Panc1 (cell line): ENCODE measurements at regions of chr17 and their contacts with region 1.

Region 1: GRCh38 chr17:77609553-77610517 is 348.7 kb upstream of the TNRC6C start:
- DNase-seq: no peak
- ATAC-seq: no peak
- H3K4me3 ChIP-seq: peak overlapping the region; percentile 4 to 37; a peak in 3 of 4 replicates
- H3K27ac ChIP-seq: no peak overlapping the region
- H3K4me1 ChIP-seq: no peaks in the 10 kb centered on the region
- H3K27me3 ChIP-seq: peaks cover 9% of the 10 kb centered on the region
- CTCF ChIP-seq: no peak

Region 2: DNA sequence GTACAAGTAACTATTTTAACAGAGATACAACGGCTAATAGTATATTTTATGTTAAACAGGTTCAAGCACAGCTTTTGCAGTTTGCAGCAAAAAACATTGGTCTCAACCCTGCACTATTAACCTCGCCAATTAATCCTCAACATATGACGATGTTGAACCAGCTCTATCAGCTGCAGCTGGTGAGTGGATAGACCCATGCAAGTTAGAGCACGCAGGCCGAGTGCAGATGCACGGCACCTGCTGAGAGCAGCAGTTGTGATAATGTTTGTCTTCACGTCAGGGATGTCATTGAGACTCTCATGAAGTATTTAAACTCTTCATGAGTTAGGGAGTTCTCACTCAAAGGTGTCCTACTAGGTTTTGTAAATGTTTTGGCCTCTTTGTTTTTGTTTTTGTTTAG is 473.2 kb after region 1 on chr17:
- CTCF ChIA-PET with region 1: no interaction called
- POLR2A ChIA-PET with region 1: interaction called, 21 read pairs
- in situ Hi-C with region 1: no loop called
- intact Hi-C with region 1: no loop called
- DNase-seq: no peak
- ATAC-seq: no peak
- H3K4me3 ChIP-seq: no peak overlapping the region
- H3K27ac ChIP-seq: no peak overlapping the region
- H3K4me1 ChIP-seq: no peaks in the 10 kb centered on the region
- H3K27me3 ChIP-seq: no peaks in the 10 kb centered on the region
- CTCF ChIP-seq: no peak